HCT116 (cell line): ENCODE measurements at regions of chr10 and their contacts with region 1.

Region 1: GRCh38 chr10:22316285-22317120 is at the start of gene COMMD3:
- DNase-seq: no peak
- ATAC-seq: peak; percentile 76
- H3K4me3 ChIP-seq: peak within 1 kb of the TSS; percentile 80 to 85
- H3K27ac ChIP-seq: peak within 1 kb of the TSS; percentile 60
- H3K4me1 ChIP-seq: peaks cover 6 to 32% of the 10 kb centered on the region in 2 experiments; a peak in 3 of 4 replicates
- H3K27me3 ChIP-seq: no peaks in the 10 kb centered on the region
- CTCF ChIP-seq: no peak
- POLR2A ChIP-seq: peak; percentile 82
- RAD21 ChIP-seq: 0 out of 2 replicates have a peak, but pooled peaks have one; percentile 17
- total RNA-seq, gene COMMD3: 43.0 TPM

Region 2: GRCh38 chr10:21926949-21927348 is 389.6 kb before region 1 on chr10:
- CTCF ChIA-PET with region 1: no interaction called
- POLR2A ChIA-PET with region 1: no interaction called
- RAD21 ChIA-PET with region 1: no interaction called
- intact Hi-C with region 1: no loop called
- DNase-seq: no peak
- ATAC-seq: peak; percentile 47; the same call in 1 of the 2 replicates
- H3K4me3 ChIP-seq: no peak overlapping the region
- H3K27ac ChIP-seq: no peak overlapping the region
- H3K4me1 ChIP-seq: peaks cover 2 to 12% of the 10 kb centered on the region in 2 experiments; a peak in 3 of 4 replicates
- H3K27me3 ChIP-seq: no peaks in the 10 kb centered on the region
- CTCF ChIP-seq: no peak
- POLR2A ChIP-seq: no peak
- RAD21 ChIP-seq: no peak

Region 3: DNA sequence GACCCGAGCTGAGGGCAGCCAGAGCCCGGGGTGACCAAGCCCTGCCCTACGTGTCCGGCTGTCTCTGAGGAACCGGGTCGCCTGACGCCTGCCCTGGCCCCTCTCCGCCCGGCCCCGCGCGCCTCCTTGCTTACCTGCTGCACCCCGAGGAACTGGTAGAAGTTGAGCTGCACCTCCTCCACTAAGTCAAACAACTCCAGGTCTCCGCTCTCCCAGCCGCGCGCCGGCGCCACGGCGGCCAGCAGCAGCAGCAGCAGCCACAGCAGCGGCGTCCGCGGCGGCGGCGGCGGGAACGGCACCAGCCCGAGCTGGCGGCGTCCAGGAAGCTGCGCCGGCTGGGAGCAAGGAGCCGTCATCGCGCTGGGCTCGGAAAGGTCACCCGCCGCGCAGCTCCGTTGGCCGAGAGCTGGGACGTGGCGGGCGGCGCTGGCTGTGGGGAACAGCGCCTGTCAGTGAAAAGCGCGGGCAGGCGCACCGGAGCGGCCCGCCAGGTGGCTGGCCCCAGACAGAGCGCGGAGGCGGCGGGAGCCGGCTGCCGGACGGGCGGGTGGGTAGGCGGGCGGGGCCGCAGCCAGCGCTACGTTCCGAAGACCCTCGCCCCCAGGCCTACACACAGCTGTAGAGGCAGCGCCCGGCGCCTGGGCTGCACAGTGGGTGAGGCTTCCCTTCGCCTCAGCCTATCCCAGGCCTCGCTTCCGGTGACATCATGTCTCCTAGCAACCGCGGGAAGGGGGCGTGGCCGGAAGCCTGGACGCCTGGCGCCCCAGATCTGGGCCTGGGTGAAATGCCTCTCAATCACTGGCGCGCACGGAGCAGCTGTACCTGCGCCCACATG is 313.2 kb before region 1 on chr10 and contains the start of gene DNAJC1:
- CTCF ChIA-PET with region 1: no interaction called
- POLR2A ChIA-PET with region 1: no interaction called
- RAD21 ChIA-PET with region 1: no interaction called
- intact Hi-C with region 1: loop called (anchors 5 kb)
- DNase-seq: peak; percentile 87
- ATAC-seq: peak; percentile 97
- H3K4me3 ChIP-seq: peak within 1 kb of the TSS; percentile 79 to 82
- H3K27ac ChIP-seq: peak within 1 kb of the TSS; percentile 73
- H3K4me1 ChIP-seq: peaks cover 8 to 15% of the 10 kb centered on the region in 2 experiments; a peak in 3 of 4 replicates
- H3K27me3 ChIP-seq: no peaks in the 10 kb centered on the region
- CTCF ChIP-seq: no peak
- POLR2A ChIP-seq: peak; percentile 52
- RAD21 ChIP-seq: no peak
- total RNA-seq, gene DNAJC1: 17.9 TPM

Region 4: GRCh38 chr10:22228943-22229801 is 87.3 kb before region 1 on chr10:
- CTCF ChIA-PET with region 1: no interaction called
- POLR2A ChIA-PET with region 1: no interaction called
- RAD21 ChIA-PET with region 1: no interaction called
- intact Hi-C with region 1: loop called (anchors 1 kb)
- DNase-seq: peak; percentile 86
- ATAC-seq: peak; percentile 90
- H3K4me3 ChIP-seq: peak overlapping the region; percentile 45 to 51
- H3K27ac ChIP-seq: peak overlapping the region; percentile 67
- H3K4me1 ChIP-seq: peaks cover 0 to 22% of the 10 kb centered on the region in 2 experiments; a peak in 3 of 4 replicates
- H3K27me3 ChIP-seq: no peaks in the 10 kb centered on the region
- CTCF ChIP-seq: no peak
- POLR2A ChIP-seq: no peak
- RAD21 ChIP-seq: no peak

Region 5: DNA sequence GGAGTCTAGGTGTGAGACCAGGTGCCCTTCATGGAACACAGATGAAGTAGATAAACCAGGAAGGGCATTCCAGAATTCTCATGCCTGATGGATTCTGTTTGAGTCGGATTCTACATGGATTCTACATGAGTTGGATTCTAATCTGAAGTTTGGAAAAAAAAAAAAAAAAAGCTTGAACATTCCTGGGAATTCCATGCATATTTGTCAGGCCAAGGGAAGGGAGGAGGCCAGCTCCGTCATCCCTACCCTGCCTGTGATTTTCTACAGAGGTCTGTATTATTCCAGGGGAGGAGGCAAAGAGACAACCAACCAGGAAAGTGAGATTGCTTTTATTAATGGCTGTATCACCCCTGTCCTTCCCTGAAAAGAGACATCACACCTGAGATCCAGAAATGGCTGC is 70.9 kb before region 1 on chr10:
- CTCF ChIA-PET with region 1: no interaction called
- POLR2A ChIA-PET with region 1: no interaction called
- RAD21 ChIA-PET with region 1: interaction called in 1 of 2 experiments, 3 read pairs
- intact Hi-C with region 1: loop called (anchors 2 kb)
- DNase-seq: no peak
- ATAC-seq: no peak
- H3K4me3 ChIP-seq: no peak overlapping the region
- H3K27ac ChIP-seq: peak overlapping the region; percentile 74; the same call in 1 of the 2 replicates
- H3K4me1 ChIP-seq: peaks cover 28 to 50% of the 10 kb centered on the region in 2 experiments
- H3K27me3 ChIP-seq: no peaks in the 10 kb centered on the region
- CTCF ChIP-seq: no peak
- POLR2A ChIP-seq: no peak
- RAD21 ChIP-seq: no peak

Region 6: DNA sequence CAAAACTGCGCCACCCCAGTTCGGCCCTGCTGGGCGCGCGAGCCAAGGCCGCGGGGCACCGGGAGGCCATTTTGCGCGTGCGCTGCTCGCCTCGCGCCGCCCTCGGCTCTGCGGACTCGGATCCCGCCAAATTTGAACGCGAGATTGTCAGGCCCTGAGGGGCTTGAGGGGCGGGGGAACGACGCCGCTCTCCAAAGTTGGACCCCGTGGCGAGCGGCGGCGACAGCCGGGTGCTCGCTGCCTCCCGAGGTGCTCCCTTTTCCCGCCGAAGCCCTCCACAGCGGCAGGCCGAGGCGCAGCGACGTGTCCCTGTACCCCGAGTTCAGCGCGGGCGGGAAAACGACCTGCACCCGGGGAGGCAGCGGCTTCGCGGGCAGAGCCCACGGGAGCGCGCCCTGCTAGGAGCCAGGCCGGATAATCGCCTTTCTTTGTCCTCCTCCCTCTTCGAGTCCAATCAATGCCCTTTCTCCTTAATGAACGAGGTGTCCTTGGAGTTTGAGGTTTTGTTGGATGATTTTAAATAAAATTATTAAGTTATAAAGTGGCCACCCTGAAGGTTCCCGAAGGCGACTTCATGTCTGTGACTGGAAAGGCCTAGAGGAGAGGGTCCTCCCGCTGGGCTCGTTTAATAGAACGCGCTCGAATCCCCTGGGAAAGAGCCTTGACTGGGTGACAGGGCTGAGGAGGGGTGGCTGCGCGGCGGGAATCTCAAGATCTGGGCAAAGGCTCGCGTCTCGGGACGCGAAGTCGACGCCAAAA is 18.1 kb after region 1 on chr10:
- CTCF ChIA-PET with region 1: no interaction called
- POLR2A ChIA-PET with region 1: no interaction called
- RAD21 ChIA-PET with region 1: no interaction called
- intact Hi-C with region 1: no loop called
- DNase-seq: no peak
- ATAC-seq: no peak
- H3K4me3 ChIP-seq: no peak overlapping the region
- H3K27ac ChIP-seq: no peak overlapping the region
- H3K4me1 ChIP-seq: peaks cover 0 to under 1% of the 10 kb centered on the region in 2 experiments; a peak in 1 of 4 replicates
- H3K27me3 ChIP-seq: peaks cover 8% of the 10 kb centered on the region; the same call in 1 of the 2 replicates
- CTCF ChIP-seq: no peak
- POLR2A ChIP-seq: no peak
- RAD21 ChIP-seq: no peak

Region 7: GRCh38 chr10:22346096-22346661 is 29.7 kb after region 1 on chr10:
- CTCF ChIA-PET with region 1: no interaction called
- POLR2A ChIA-PET with region 1: no interaction called
- RAD21 ChIA-PET with region 1: no interaction called
- intact Hi-C with region 1: no loop called
- DNase-seq: no peak
- ATAC-seq: no peak
- H3K4me3 ChIP-seq: no peak overlapping the region
- H3K27ac ChIP-seq: no peak overlapping the region
- H3K4me1 ChIP-seq: peaks cover 3 to 8% of the 10 kb centered on the region in 2 experiments; a peak in 2 of 4 replicates
- H3K27me3 ChIP-seq: 0 out of 2 replicates have a peak, but pooled peaks cover 3% of the 10 kb centered on the region
- CTCF ChIP-seq: no peak
- POLR2A ChIP-seq: no peak
- RAD21 ChIP-seq: no peak

Region 8: GRCh38 chr10:22427890-22428571 is 111.5 kb after region 1 on chr10:
- CTCF ChIA-PET with region 1: no interaction called
- POLR2A ChIA-PET with region 1: no interaction called
- RAD21 ChIA-PET with region 1: no interaction called
- intact Hi-C with region 1: loop called (anchors 5 kb)
- DNase-seq: peak; percentile 92
- ATAC-seq: peak; percentile 80
- H3K4me3 ChIP-seq: peak overlapping the region; percentile 4 to 46; a peak in 3 of 4 replicates
- H3K27ac ChIP-seq: peak overlapping the region; percentile 92
- H3K4me1 ChIP-seq: peaks cover 44 to 63% of the 10 kb centered on the region in 2 experiments
- H3K27me3 ChIP-seq: no peaks in the 10 kb centered on the region
- CTCF ChIP-seq: no peak
- POLR2A ChIP-seq: no peak
- RAD21 ChIP-seq: no peak